HCT116 (cell line): ENCODE measurements at regions of chr3 and their contacts with region 1.

Region 1: DNA sequence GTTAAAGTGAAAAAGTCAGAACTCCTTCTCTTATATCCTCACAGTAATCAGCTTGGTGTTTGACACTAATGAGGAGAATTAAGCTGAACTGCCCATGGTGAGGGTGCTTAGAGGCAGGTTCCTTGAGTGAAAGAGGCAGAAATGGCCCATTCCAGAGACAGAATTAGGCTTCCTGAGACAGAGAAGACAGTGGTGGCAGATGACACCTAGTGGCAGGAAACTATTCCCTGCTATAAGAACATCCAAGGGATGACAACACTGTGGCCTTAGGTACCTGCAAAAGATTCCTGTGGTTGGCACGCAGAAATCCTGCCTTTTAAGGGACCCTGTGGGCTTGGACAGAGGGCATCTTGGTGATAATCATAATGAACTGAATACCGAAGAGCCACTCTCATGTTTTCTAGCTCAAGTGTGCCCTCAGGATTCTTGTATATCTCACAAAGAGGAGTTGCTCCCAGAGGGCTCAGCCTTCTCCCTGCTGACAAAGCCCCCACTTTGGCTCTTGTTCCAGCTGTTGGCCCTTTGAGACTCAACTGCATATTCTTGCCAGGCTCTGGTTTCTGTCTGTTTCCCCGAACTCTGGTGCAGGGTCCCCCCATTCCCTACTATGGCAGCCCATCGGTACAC is 56.0 kb downstream of the KBTBD12 start:
- DNase-seq: peak; percentile 54
- ATAC-seq: peak; percentile 99
- H3K4me3 ChIP-seq: no peak overlapping the region
- H3K27ac ChIP-seq: no peak overlapping the region
- H3K4me1 ChIP-seq: no peaks in the 10 kb centered on the region
- H3K27me3 ChIP-seq: no peaks in the 10 kb centered on the region
- CTCF ChIP-seq: peak; percentile 78 to 83 (median 82)
- POLR2A ChIP-seq: no peak
- RAD21 ChIP-seq: peak; percentile 89

Region 2: GRCh38 chr3:127574880-127575878 is 395.9 kb before region 1 on chr3:
- CTCF ChIA-PET with region 1: interaction called, 3 read pairs
- POLR2A ChIA-PET with region 1: no interaction called
- RAD21 ChIA-PET with region 1: no interaction called
- intact Hi-C with region 1: loop called (anchors 5 kb)
- DNase-seq: peak; percentile 71
- ATAC-seq: peak; percentile 91
- H3K4me3 ChIP-seq: no peak overlapping the region
- H3K27ac ChIP-seq: peak overlapping the region; percentile 38; the same call in 1 of the 2 replicates
- H3K4me1 ChIP-seq: peaks cover 0 to 4% of the 10 kb centered on the region in 2 experiments; a peak in 1 of 4 replicates
- H3K27me3 ChIP-seq: no peaks in the 10 kb centered on the region
- CTCF ChIP-seq: peak; percentile 76 to 99 (median 98)
- POLR2A ChIP-seq: no peak
- RAD21 ChIP-seq: peak; percentile 86

Region 3: GRCh38 chr3:127652231-127652995 is 318.7 kb before region 1 on chr3:
- CTCF ChIA-PET with region 1: interaction called, 3 read pairs
- POLR2A ChIA-PET with region 1: no interaction called
- RAD21 ChIA-PET with region 1: no interaction called
- intact Hi-C with region 1: loop called (anchors 1 kb)
- DNase-seq: peak; percentile 41
- ATAC-seq: peak; percentile 94
- H3K4me3 ChIP-seq: no peak overlapping the region
- H3K27ac ChIP-seq: no peak overlapping the region
- H3K4me1 ChIP-seq: peaks cover 3 to 15% of the 10 kb centered on the region in 2 experiments
- H3K27me3 ChIP-seq: no peaks in the 10 kb centered on the region
- CTCF ChIP-seq: peak; percentile 82 to 94 (median 91)
- POLR2A ChIP-seq: no peak
- RAD21 ChIP-seq: peak; percentile 97

Region 4: DNA sequence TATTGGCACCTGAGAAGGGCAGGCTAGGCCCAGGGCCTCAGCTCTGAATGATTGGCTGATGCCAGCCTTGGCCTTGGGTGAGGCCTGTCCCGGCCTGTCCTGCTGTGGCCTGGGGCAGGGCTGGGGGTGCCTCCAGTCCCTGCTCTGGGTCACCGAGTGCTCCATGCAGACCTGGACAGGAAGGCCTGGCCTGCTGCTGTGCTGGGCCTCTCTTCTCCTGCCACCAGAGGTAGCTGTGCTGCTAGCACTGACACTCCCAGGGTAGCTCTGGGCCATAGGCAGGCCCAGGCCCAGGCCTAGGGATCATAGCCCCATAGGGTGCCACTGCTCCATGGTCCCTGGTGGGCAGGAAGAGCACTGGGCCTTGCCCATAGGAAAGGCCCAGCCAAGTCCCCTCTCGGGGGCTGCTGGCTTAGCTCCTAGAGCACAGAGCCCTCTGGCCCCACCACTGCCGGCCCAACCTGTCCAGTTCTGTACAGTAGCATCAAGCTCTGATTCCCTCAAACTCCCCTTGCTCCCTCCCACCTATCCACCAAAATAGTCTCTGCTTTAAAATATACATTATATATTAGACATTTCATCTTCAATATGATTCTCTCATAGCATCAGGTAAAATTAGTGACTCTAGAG is 280.1 kb before region 1 on chr3:
- CTCF ChIA-PET with region 1: interaction called, 3 read pairs
- POLR2A ChIA-PET with region 1: no interaction called
- RAD21 ChIA-PET with region 1: no interaction called
- intact Hi-C with region 1: loop called (anchors 1 kb)
- DNase-seq: peak; percentile 43
- ATAC-seq: peak; percentile 95
- H3K4me3 ChIP-seq: no peak overlapping the region
- H3K27ac ChIP-seq: peak overlapping the region; percentile 30
- H3K4me1 ChIP-seq: peaks cover 13 to 36% of the 10 kb centered on the region in 2 experiments
- H3K27me3 ChIP-seq: no peaks in the 10 kb centered on the region
- CTCF ChIP-seq: peak; percentile 70 to 84 (median 84)
- POLR2A ChIP-seq: no peak
- RAD21 ChIP-seq: peak; percentile 90